ENCODE measurements at regions of chr3 and their contacts with region 1.

Region 1: GRCh38 chr3:71456156-71456555 is 127.4 kb downstream of the FOXP1 start:
- DNase-seq: no peak
- ATAC-seq: peak; percentile 21
- H3K4me3 Mint-ChIP-seq: peak overlapping the region; percentile 79
- H3K27ac Mint-ChIP-seq: peak overlapping the region; percentile 95
- H3K4me1 Mint-ChIP-seq: peaks cover 72% of the 10 kb centered on the region
- H3K27me3 Mint-ChIP-seq: no peaks in the 10 kb centered on the region

Region 2: DNA sequence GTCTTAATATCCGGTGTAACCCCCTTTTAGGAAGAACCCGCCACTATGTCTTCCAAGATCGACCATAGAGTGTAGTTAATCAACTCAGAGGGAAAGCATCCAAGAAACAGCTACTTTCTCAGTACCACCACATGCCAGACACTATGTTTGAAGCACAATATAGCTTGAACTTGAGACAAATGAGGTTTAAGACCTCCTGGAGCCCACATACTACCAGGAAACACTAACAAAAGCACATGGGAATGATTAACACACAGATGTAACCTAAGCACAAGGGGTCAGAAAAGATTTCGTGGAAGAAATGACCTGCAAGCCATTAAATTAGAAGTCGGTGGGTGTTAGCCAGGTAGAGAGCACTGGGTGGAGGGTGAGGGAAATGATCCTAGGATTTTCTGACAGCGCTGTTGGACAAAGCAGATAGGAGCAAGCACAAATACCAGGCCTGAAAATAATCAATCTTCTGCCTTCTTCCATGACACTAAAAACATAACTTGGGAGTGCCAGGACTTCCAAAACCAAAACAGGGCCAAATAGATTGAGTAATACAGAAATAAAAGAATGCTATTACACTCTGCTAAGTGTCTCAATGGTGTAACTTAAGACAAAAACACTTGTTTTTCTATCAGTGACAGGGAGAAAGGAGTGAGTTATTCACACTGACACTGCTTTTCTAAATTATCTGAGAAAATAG is 86.3 kb before region 1 on chr3:
- POLR2A ChIA-PET with region 1: no interaction called
- DNase-seq: no peak
- ATAC-seq: no peak
- H3K4me3 Mint-ChIP-seq: no peak overlapping the region
- H3K27ac Mint-ChIP-seq: peak overlapping the region; percentile 27
- H3K4me1 Mint-ChIP-seq: peaks cover 35% of the 10 kb centered on the region
- H3K27me3 Mint-ChIP-seq: no peaks in the 10 kb centered on the region

Region 3: DNA sequence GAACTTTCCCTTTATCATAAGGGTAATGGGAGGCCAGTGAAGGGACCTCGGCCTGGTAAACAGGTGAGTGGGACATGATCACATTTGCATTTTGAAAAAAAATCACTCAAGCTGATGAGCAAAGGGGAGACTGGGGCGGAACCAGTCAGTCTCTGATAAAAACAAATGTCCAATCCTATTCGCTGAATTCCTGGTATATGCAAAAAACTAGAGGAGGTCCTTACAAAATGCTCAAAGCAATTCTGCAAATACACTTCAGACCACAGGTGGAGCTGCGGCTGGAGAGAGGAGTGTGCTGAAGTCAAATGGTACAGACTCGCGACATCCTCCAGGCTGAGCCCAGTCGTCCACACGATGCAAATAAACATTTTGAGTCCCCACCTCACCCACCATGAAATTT is 39.3 kb before region 1 on chr3:
- POLR2A ChIA-PET with region 1: interaction called, 14 read pairs
- DNase-seq: peak; percentile 57
- ATAC-seq: peak; percentile 79
- H3K4me3 Mint-ChIP-seq: peak overlapping the region; percentile 80
- H3K27ac Mint-ChIP-seq: peak overlapping the region; percentile 93
- H3K4me1 Mint-ChIP-seq: peaks cover 65% of the 10 kb centered on the region
- H3K27me3 Mint-ChIP-seq: no peaks in the 10 kb centered on the region

Region 4: GRCh38 chr3:71423151-71423906 is 32.8 kb before region 1 on chr3:
- POLR2A ChIA-PET with region 1: interaction called, 11 read pairs
- DNase-seq: no peak
- ATAC-seq: no peak
- H3K4me3 Mint-ChIP-seq: peak overlapping the region; percentile 72
- H3K27ac Mint-ChIP-seq: peak overlapping the region; percentile 97
- H3K4me1 Mint-ChIP-seq: peaks cover 70% of the 10 kb centered on the region
- H3K27me3 Mint-ChIP-seq: no peaks in the 10 kb centered on the region

Region 5: GRCh38 chr3:71487418-71487817 is 31.3 kb after region 1 on chr3:
- POLR2A ChIA-PET with region 1: interaction called, 54 read pairs
- DNase-seq: no peak
- ATAC-seq: peak; percentile 12
- H3K4me3 Mint-ChIP-seq: peak overlapping the region; percentile 77
- H3K27ac Mint-ChIP-seq: peak overlapping the region; percentile 92
- H3K4me1 Mint-ChIP-seq: peaks cover 74% of the 10 kb centered on the region
- H3K27me3 Mint-ChIP-seq: no peaks in the 10 kb centered on the region

Region 6: DNA sequence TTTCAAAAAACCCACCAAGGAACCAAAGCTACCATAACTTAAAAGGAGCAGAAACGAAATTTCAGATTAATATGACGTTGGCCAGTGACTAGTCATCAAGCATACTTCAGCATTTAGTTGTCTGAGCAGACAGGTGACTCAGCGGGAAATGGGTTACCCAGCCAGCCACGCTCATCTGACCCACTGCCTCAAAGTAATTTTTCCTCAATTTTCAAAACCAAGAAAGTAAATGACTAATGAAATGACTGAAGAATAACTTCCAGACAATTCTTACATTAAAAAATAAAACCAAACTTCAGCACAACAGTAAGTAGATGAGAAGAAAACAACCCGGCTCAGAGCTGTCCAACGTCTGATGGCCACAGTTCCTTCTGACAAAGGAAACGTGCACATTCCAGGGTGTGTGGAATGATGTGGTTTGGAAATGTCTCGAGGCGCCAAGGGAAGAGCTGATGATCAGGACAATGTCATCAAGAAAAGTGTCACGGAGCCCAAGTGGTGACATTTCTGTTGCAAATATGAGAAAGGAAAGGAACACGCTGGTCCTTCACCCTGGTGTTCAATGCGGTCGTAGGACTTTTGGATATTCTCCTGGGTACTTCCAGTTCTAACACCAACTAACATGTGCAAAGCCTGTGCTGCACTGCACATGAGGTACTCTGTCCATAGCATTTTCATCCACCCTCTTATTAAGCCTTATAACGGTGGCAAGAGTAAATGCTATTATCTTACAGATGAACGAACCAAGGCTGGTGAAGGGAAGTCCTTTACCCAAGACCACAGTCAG is 48.3 kb after region 1 on chr3:
- POLR2A ChIA-PET with region 1: no interaction called
- DNase-seq: no peak
- ATAC-seq: no peak
- H3K4me3 Mint-ChIP-seq: no peak overlapping the region
- H3K27ac Mint-ChIP-seq: no peak overlapping the region
- H3K4me1 Mint-ChIP-seq: peaks cover 27% of the 10 kb centered on the region
- H3K27me3 Mint-ChIP-seq: no peaks in the 10 kb centered on the region

Measured in activated naive CD8-positive, alpha-beta T cell treated with anti-CD3 and anti-CD28 coated beads, Interleukin-2, amount 10 ng/mL, durations not matched to agents 7 days and 5 days (primary cell).